Caco-2 (cell line): ENCODE measurements at regions of chr5 and their contacts with region 1.

Region 1: GRCh38 chr5:170747851-170748250 is 35.7 kb upstream of the GABRP start:
- DNase-seq: peak; percentile 57 to 58
- H3K4me3 ChIP-seq: no peak overlapping the region
- H3K4me3 Mint-ChIP-seq: no peak overlapping the region
- H3K27ac Mint-ChIP-seq: peak overlapping the region; percentile 70
- H3K4me1 ChIP-seq: peaks cover 41% of the 10 kb centered on the region
- H3K4me1 Mint-ChIP-seq: peaks cover 5% of the 10 kb centered on the region
- H3K27me3 ChIP-seq: no peaks in the 10 kb centered on the region
- H3K27me3 Mint-ChIP-seq: peaks cover 6% of the 10 kb centered on the region
- CTCF ChIP-seq: peak; percentile 53 to 55

Region 2: GRCh38 chr5:170638454-170639220 is 109.2 kb before region 1 on chr5:
- CTCF ChIA-PET with region 1: interaction called, 6 read pairs
- POLR2A ChIA-PET with region 1: no interaction called
- intact Hi-C with region 1: loop called (anchors 2 kb)
- DNase-seq: peak; percentile 69 to 80
- H3K4me3 ChIP-seq: no peak overlapping the region
- H3K4me3 Mint-ChIP-seq: no peak overlapping the region
- H3K27ac Mint-ChIP-seq: no peak overlapping the region
- H3K4me1 ChIP-seq: peaks cover 6% of the 10 kb centered on the region; the same call in 1 of the 2 replicates
- H3K4me1 Mint-ChIP-seq: peaks cover 17% of the 10 kb centered on the region
- H3K27me3 ChIP-seq: no peaks in the 10 kb centered on the region; the same call in 1 of the 2 replicates
- H3K27me3 Mint-ChIP-seq: peaks cover 21% of the 10 kb centered on the region
- CTCF ChIP-seq: peak; percentile 79 to 87

Region 3: DNA sequence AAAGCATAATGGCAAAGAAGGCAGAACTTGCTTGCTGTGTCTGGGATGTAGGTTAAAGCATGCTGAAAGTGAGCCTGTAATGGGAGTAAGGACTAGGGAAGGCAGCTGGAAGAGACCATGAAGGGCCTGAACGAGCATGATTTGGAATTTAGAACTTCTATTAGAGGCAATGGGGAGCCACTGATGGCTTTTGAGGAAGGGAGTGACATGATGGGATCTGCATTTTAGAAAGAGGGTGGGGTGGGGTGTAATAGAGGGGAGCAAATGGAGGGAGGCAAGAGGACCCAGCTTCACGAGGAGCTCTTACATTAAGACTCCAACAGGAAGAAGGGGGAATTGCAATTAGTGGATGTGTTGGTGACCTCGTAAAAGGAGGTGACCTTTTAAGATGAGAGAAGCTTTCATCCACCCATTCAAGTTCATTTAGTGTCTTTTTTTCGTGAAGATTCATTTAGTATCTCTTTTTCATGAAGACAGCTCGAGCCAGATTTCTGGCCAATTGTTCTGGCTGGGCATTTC is 22.1 kb after region 1 on chr5:
- CTCF ChIA-PET with region 1: interaction called, 3 read pairs
- POLR2A ChIA-PET with region 1: no interaction called
- intact Hi-C with region 1: loop called (anchors 2 kb)
- DNase-seq: no peak
- H3K4me3 ChIP-seq: no peak overlapping the region
- H3K4me3 Mint-ChIP-seq: no peak overlapping the region
- H3K27ac Mint-ChIP-seq: no peak overlapping the region
- H3K4me1 ChIP-seq: no peaks in the 10 kb centered on the region
- H3K4me1 Mint-ChIP-seq: no peaks in the 10 kb centered on the region
- H3K27me3 ChIP-seq: no peaks in the 10 kb centered on the region
- H3K27me3 Mint-ChIP-seq: no peaks in the 10 kb centered on the region
- CTCF ChIP-seq: no peak

Region 4: DNA sequence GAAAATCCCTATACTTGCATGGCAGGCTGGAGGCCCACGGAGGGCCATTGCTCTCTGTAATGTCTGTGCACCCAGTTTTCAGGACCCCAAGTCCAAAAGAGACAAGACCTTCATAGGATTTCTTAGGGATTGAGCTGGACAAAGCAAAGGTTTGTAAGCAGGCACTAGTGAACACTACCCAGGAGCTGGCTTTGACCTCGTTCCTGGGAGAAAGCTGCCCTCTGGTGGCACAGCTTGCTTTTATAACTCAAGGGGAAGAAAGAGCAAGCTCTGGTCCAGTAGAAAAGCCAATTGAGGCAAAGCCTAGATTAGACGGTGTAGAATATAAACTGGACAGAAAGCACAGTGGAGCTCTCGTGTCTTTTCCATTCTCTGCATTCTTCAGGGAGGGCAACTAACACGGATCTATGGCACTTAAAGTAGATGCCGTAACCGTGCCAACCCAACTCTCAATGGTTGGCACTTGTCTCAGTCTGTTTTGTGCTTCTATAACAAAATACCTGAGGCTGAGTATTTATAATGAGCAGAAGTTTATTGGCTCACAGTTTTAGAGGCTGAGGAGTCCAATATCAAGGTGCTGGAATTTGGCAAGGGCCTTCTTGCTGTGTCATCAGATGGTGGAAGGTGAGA is 43.6 kb after region 1 on chr5:
- CTCF ChIA-PET with region 1: interaction called, 115 read pairs
- POLR2A ChIA-PET with region 1: interaction called, 6 read pairs
- intact Hi-C with region 1: loop called (anchors 1 kb)
- DNase-seq: peak; percentile 69 to 80
- H3K4me3 ChIP-seq: no peak overlapping the region
- H3K4me3 Mint-ChIP-seq: no peak overlapping the region
- H3K27ac Mint-ChIP-seq: no peak overlapping the region
- H3K4me1 ChIP-seq: no peaks in the 10 kb centered on the region
- H3K4me1 Mint-ChIP-seq: no peaks in the 10 kb centered on the region
- H3K27me3 ChIP-seq: peaks cover 2% of the 10 kb centered on the region; the same call in 1 of the 2 replicates
- H3K27me3 Mint-ChIP-seq: peaks cover 4% of the 10 kb centered on the region
- CTCF ChIP-seq: peak; percentile 77 to 78

Region 5: DNA sequence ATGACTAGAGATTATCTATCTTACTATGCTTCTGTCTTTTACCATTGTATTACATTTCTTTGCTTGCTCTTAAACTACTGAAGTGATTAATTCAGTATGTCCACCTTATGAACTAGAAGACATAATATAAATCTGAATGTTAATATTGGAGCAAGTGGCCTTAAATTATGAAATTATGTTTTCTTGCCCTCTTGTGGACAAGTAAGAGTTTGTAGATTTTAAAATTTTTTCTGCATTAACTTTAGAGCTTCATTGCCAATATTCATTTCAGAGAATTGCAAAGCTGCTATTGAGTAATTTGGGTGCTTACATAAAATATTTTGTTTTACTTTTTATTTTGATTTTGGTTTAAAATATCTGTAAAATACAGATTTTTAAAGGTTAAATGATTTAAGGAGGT is 169.3 kb after region 1 on chr5:
- CTCF ChIA-PET with region 1: no interaction called
- POLR2A ChIA-PET with region 1: no interaction called
- intact Hi-C with region 1: loop called (anchors 10 kb)
- DNase-seq: no peak
- H3K4me3 ChIP-seq: no peak overlapping the region
- H3K4me3 Mint-ChIP-seq: no peak overlapping the region
- H3K27ac Mint-ChIP-seq: no peak overlapping the region
- H3K4me1 ChIP-seq: no peaks in the 10 kb centered on the region
- H3K4me1 Mint-ChIP-seq: no peaks in the 10 kb centered on the region
- H3K27me3 ChIP-seq: no peaks in the 10 kb centered on the region
- H3K27me3 Mint-ChIP-seq: no peaks in the 10 kb centered on the region
- CTCF ChIP-seq: peak in 1 of 2 experiments; percentile 4

Region 6: GRCh38 chr5:171152382-171152781 is 404.5 kb after region 1 on chr5:
- CTCF ChIA-PET with region 1: no interaction called
- POLR2A ChIA-PET with region 1: no interaction called
- intact Hi-C with region 1: loop called (anchors 5 kb)
- DNase-seq: peak in 1 of 2 experiments; percentile 38
- H3K4me3 ChIP-seq: no peak overlapping the region
- H3K4me3 Mint-ChIP-seq: no peak overlapping the region
- H3K27ac Mint-ChIP-seq: no peak overlapping the region
- H3K4me1 ChIP-seq: no peaks in the 10 kb centered on the region
- H3K4me1 Mint-ChIP-seq: no peaks in the 10 kb centered on the region
- H3K27me3 ChIP-seq: no peaks in the 10 kb centered on the region
- H3K27me3 Mint-ChIP-seq: no peaks in the 10 kb centered on the region
- CTCF ChIP-seq: peak; percentile 36 to 46

Region 7: DNA sequence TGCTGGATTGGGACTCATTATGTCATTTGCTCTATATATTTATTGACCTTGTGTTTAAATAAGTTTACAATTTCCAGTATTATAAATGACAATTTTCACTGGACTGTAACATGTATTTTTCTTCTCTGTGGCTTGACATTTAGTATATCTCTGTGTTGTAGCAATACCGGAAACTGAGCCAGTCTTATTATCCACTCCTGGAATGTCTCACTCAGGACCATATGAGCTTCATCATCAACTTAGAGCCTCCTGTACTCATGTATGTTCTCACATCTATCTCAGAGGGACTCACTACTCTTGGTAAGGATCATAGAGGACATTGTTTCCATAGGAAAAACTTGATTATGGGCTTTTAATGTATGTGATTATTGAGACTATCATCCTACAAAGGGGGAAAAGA is 494.7 kb after region 1 on chr5:
- CTCF ChIA-PET with region 1: no interaction called
- POLR2A ChIA-PET with region 1: no interaction called
- intact Hi-C with region 1: no loop called
- DNase-seq: no peak
- H3K4me3 ChIP-seq: no peak overlapping the region
- H3K4me3 Mint-ChIP-seq: no peak overlapping the region
- H3K27ac Mint-ChIP-seq: no peak overlapping the region
- H3K4me1 ChIP-seq: no peaks in the 10 kb centered on the region
- H3K4me1 Mint-ChIP-seq: no peaks in the 10 kb centered on the region
- H3K27me3 ChIP-seq: no peaks in the 10 kb centered on the region
- H3K27me3 Mint-ChIP-seq: no peaks in the 10 kb centered on the region
- CTCF ChIP-seq: no peak

Region 8: DNA sequence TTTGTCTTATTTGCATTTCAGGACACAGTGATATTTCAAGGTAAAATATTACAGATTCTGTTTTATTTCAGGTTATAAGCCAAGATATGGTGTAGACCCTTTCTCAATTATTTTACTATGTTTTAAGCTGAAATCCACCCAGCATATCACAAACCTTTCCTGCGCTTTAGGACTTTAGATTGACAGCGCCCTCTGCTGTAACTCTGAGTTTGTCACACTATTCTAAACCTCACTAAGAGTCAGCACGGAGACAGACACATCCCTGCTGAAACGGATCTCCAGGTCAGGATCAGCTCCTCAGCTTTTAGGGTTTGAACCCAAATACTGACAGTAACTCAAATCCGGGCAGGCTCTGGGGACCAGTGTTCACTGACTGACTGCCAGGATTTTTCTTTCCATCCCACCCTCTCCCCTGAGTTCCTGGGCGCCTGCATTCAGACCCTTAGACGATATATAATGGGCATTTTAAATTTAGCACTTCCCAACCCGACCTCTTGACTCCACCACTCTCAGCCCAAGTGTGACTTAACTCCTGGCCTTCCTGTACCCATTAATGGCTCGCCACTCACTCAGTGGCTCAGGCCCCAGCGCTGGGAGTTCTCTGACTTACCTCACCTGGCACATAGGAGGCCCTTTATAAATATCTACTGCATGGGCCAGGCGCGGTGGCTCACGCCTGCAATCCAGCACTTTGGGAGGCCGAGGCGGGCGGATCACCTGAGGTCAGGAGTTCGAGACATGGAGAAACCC is 594.7 kb after region 1 on chr5:
- CTCF ChIA-PET with region 1: no interaction called
- POLR2A ChIA-PET with region 1: no interaction called
- intact Hi-C with region 1: loop called (anchors 5 kb)
- DNase-seq: peak; percentile 50 to 60
- H3K4me3 ChIP-seq: no peak overlapping the region
- H3K4me3 Mint-ChIP-seq: no peak overlapping the region
- H3K27ac Mint-ChIP-seq: no peak overlapping the region
- H3K4me1 ChIP-seq: peaks cover 8% of the 10 kb centered on the region
- H3K4me1 Mint-ChIP-seq: no peaks in the 10 kb centered on the region
- H3K27me3 ChIP-seq: no peaks in the 10 kb centered on the region
- H3K27me3 Mint-ChIP-seq: no peaks in the 10 kb centered on the region
- CTCF ChIP-seq: peak; percentile 69 to 75